ENCODE measurements at regions of chr14 and their contacts with region 1.

Region 1: GRCh38 chr14:77028384-77029231 is at the start of gene IRF2BPL:
- DNase-seq: peak; percentile 96
- H3K4me3 ChIP-seq: peak within 1 kb of the TSS; percentile 56 to 88 (median 79)
- H3K27ac ChIP-seq: peak within 1 kb of the TSS; percentile 81
- H3K4me1 ChIP-seq: peaks cover 48% of the 10 kb centered on the region
- H3K27me3 ChIP-seq: no peaks in the 10 kb centered on the region
- CTCF ChIP-seq: no peak
- total RNA-seq, gene IRF2BPL: 41.3 to 49.4 TPM

Region 2: GRCh38 chr14:76918751-76919543 is 109.7 kb before region 1 on chr14:
- CTCF ChIA-PET with region 1: no interaction called
- dilution Hi-C with region 1: no loop called
- in situ Hi-C with region 1: loop called in 1 of 2 experiments (anchors 5 kb)
- intact Hi-C with region 1: loop called (anchors 1 kb)
- DNase-seq: peak; percentile 96
- H3K4me3 ChIP-seq: no peak overlapping the region
- H3K27ac ChIP-seq: peak overlapping the region; percentile 88
- H3K4me1 ChIP-seq: peaks cover 44% of the 10 kb centered on the region
- H3K27me3 ChIP-seq: no peaks in the 10 kb centered on the region
- CTCF ChIP-seq: peak in 1 of 2 donors; percentile 28

Region 3: DNA sequence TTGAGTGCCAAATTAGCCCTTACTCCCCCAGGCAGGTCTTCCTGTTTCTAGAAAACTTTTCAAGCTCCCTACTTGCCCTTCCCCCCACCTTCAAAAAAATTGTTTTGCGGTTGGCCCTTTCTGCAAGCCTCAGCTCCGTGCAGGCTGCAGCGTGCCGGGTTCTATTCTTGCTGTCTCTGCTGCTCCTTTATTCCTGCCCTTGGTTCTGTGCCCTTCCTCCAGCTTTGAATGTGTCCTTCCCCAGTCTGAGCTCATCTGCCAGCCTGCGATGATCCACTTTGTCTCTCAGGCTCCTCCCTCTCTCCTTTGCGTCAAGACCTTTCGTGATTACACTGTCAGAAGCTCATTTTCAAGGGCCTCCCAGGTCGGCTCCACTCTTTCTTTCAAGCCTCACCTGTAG is 98.7 kb before region 1 on chr14:
- CTCF ChIA-PET with region 1: interaction called, 26 read pairs
- dilution Hi-C with region 1: loop called (anchors 5 kb)
- in situ Hi-C with region 1: no loop called
- intact Hi-C with region 1: no loop called
- DNase-seq: peak; percentile 59
- H3K4me3 ChIP-seq: no peak overlapping the region
- H3K27ac ChIP-seq: no peak overlapping the region
- H3K4me1 ChIP-seq: peaks cover 16% of the 10 kb centered on the region
- H3K27me3 ChIP-seq: no peaks in the 10 kb centered on the region
- CTCF ChIP-seq: no peak

Region 4: DNA sequence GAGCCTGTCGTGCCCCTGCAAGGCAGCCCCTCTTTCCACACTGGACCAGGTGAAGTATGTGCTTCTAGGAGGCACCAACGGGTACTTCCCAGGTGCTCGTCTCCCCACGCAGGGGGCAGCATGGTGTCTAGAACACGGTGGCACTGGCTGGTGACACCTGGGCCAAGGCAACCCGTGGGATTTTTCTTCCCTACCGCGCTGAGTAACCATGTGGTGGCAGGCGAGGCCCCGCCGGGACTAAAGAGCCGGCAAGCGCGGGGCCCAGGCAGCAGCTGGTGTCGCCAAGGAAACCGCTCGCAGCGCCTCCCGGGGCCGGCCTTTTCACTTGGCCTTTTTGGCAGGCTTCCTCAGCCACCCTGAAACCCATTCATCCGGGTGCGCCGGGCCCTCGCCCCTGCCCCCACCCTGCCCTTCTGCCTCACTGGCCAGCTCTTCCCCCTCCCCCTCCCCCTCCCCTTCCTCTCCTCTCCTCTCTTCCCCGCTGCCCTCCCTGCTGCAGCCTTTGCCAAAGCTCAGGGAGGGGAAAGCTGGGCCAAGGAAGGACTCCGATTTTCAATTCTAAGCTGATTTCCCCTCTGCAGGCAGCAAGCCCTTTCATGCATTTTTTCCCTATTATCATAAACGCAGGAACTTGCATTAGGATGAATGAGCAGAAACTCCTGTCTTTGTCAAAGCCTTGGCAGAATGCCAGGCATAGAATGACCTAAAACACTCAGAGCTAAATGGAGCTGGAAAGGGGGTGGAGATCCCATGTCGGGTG is 81.3 kb before region 1 on chr14:
- CTCF ChIA-PET with region 1: no interaction called
- dilution Hi-C with region 1: no loop called
- in situ Hi-C with region 1: no loop called
- intact Hi-C with region 1: loop called (anchors 1 kb)
- DNase-seq: peak; percentile 83
- H3K4me3 ChIP-seq: no peak overlapping the region
- H3K27ac ChIP-seq: peak overlapping the region; percentile 58
- H3K4me1 ChIP-seq: peaks cover 45% of the 10 kb centered on the region
- H3K27me3 ChIP-seq: no peaks in the 10 kb centered on the region
- CTCF ChIP-seq: peak; percentile 16 to 74

Region 5: GRCh38 chr14:77040059-77040740 is 11.6 kb after region 1 on chr14:
- CTCF ChIA-PET with region 1: interaction called, 3 read pairs
- dilution Hi-C with region 1: no loop called
- in situ Hi-C with region 1: no loop called
- intact Hi-C with region 1: loop called (anchors 1 kb)
- DNase-seq: peak; percentile 91
- H3K4me3 ChIP-seq: peak overlapping the region; percentile 10 to 25 (median 23)
- H3K27ac ChIP-seq: peak overlapping the region; percentile 97
- H3K4me1 ChIP-seq: peaks cover 73% of the 10 kb centered on the region
- H3K27me3 ChIP-seq: no peaks in the 10 kb centered on the region
- CTCF ChIP-seq: no peak